Sigmoid colon (tissue), 7 donors: ENCODE measurements at regions of chr10 and their contacts with region 1.

Region 1: DNA sequence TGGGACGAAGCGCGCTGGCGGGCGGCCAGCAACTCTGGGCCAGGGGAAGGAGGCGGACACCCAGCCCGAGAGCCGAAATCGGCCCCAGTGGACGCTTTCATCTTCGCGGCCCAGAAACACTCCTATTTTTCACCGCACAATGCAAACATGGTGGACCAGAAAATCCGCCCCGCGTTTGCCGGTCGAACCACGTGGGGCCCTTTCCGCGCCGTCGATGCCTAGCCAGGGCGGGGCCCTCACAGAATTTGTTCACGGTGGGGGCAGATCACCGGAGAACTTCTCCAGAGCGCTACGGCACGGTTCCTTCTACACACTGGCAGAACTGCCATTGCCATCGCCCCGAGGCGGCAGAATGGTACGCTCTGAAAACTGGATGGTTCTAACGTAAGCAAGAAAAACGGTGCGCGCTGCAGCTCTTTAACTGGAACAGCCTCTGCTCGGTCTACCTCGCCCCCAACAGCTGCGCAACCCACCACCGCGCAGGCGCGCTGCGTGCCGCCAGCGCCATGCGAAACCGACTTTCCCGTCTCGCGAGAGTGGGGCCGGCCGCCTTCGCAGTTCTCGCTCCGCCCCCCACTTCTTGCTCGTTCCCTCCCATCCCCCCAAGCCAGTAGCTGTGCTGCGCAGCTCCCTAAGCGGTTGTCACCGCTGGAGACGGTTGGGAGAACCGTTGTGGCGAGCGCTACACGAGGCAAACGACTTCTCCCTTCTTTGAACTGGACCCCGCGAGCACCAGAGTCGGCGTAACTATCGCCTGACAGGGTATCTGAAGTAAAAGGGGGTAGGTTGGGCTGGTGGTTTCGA is at the start of gene HNRNPH3:
- DNase-seq: peak; percentile 99
- H3K4me3 ChIP-seq: peak within 1 kb of the TSS; percentile 72 to 98 (median 87)
- H3K27ac ChIP-seq: peak within 1 kb of the TSS; percentile 91 to 100 (median 98)
- H3K4me1 ChIP-seq: peaks cover 0 to 53% (median 47%) of the 10 kb centered on the region in 4 donors
- H3K27me3 ChIP-seq: no peaks in the 10 kb centered on the region
- CTCF ChIP-seq: no peak
- EP300 ChIP-seq: peak in 1 of 4 donors; percentile 25
- POLR2A ChIP-seq: peak; percentile 99
- total RNA-seq, gene HNRNPH3: 50.7 to 68.3 (median 57.4) TPM

Region 2: GRCh38 chr10:67849331-67850011 is 482.2 kb before region 1 on chr10:
- intact Hi-C with region 1: loop called (anchors 2 kb)
- DNase-seq: peak; percentile 98
- H3K4me3 ChIP-seq: peak overlapping the region; percentile 64 to 71 (median 70)
- H3K27ac ChIP-seq: peak overlapping the region; percentile 92 to 96 (median 93)
- H3K4me1 ChIP-seq: peaks cover 0 to 8% (median 7%) of the 10 kb centered on the region in 4 donors
- H3K27me3 ChIP-seq: no peaks in the 10 kb centered on the region
- CTCF ChIP-seq: peak in 1 of 4 experiments; percentile 37
- EP300 ChIP-seq: no peak
- POLR2A ChIP-seq: peak; percentile 44 to 74

Region 3: GRCh38 chr10:67884313-67884841 is 447.3 kb before region 1 on chr10 and contains the start of gene SIRT1:
- intact Hi-C with region 1: loop called (anchors 1 kb)
- DNase-seq: peak; percentile 99
- H3K4me3 ChIP-seq: peak within 1 kb of the TSS; percentile 61 to 86 (median 66)
- H3K27ac ChIP-seq: peak within 1 kb of the TSS; percentile 85 to 98 (median 94)
- H3K4me1 ChIP-seq: peaks cover 0 to 38% (median 10%) of the 10 kb centered on the region in 4 donors
- H3K27me3 ChIP-seq: no peaks in the 10 kb centered on the region
- CTCF ChIP-seq: no peak
- EP300 ChIP-seq: peak in 1 of 4 donors; percentile 40
- POLR2A ChIP-seq: peak; percentile 69 to 88
- total RNA-seq, gene SIRT1: 22.4 to 38.2 (median 33.9) TPM

Region 4: DNA sequence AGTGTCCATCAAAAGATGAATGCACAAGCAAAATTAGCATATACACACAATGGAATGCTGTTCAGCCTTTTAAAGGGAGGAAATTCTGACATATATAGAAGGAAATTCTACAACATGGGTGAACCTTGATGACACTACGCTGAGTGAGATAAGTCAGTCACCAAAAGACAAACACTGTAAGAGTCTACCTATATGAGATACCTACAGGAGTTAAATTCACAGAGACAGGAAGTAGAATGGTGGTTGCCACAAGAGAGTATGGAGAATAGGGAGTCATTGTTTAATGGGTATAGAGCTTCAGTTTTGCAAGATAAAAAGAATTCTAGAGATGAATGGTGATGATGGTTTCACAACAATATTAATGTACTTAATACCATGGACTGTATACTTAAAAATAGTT is 308.4 kb before region 1 on chr10:
- intact Hi-C with region 1: no loop called
- DNase-seq: no peak
- H3K4me3 ChIP-seq: no peak overlapping the region
- H3K27ac ChIP-seq: no peak overlapping the region
- H3K4me1 ChIP-seq: no peaks in the 10 kb centered on the region
- H3K27me3 ChIP-seq: no peaks in the 10 kb centered on the region
- CTCF ChIP-seq: no peak
- EP300 ChIP-seq: no peak
- POLR2A ChIP-seq: no peak

Region 5: DNA sequence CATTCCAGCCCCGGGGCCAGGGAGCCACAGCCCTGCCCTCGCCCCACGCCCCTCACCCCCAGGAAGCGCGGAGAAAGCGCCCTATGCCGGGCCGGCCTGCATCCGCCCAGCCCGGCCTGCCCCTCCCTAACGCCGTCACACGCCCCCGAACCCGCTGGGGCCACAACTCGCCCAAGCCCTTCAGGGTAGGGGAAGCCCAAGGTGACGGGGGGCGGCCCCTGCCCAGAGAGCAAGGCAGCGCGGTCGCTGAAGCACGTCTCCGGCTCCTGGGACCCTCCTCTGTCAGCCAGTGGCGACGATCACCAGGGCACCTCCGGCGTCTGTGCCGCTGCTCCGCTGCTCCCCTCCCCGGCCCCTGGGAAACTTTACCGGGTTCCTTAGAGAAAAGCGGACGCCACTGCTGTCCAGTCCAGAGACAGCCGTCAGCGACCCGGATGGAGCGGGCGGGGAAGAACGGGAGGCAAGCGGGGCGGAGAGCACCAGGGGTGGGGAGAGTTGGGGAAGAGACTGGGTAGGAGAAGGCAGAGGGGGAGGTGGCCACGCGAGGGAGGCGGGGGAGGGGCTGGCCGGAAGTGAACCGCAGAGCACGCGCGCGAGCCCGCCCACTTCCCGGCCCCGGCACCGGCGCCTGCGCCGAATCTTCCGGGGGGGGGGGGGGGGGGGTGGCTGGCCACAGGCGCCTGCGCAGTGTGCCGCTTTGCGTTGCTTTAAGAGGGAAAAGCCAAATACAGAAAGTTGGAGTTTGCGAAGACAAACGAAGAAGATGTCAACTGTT is 256.7 kb before region 1 on chr10 and contains the start of gene HERC4:
- intact Hi-C with region 1: loop called (anchors 2 kb)
- DNase-seq: peak; percentile 98
- H3K4me3 ChIP-seq: peak within 1 kb of the TSS; percentile 74 to 100 (median 81)
- H3K27ac ChIP-seq: peak within 1 kb of the TSS; percentile 94 to 100 (median 98)
- H3K4me1 ChIP-seq: peaks cover 0 to 41% (median 32%) of the 10 kb centered on the region in 4 donors
- H3K27me3 ChIP-seq: no peaks in the 10 kb centered on the region
- CTCF ChIP-seq: no peak
- EP300 ChIP-seq: no peak
- POLR2A ChIP-seq: peak; percentile 70 to 77
- total RNA-seq, gene HERC4: 49.2 to 54.3 (median 52.0) TPM

Region 6: DNA sequence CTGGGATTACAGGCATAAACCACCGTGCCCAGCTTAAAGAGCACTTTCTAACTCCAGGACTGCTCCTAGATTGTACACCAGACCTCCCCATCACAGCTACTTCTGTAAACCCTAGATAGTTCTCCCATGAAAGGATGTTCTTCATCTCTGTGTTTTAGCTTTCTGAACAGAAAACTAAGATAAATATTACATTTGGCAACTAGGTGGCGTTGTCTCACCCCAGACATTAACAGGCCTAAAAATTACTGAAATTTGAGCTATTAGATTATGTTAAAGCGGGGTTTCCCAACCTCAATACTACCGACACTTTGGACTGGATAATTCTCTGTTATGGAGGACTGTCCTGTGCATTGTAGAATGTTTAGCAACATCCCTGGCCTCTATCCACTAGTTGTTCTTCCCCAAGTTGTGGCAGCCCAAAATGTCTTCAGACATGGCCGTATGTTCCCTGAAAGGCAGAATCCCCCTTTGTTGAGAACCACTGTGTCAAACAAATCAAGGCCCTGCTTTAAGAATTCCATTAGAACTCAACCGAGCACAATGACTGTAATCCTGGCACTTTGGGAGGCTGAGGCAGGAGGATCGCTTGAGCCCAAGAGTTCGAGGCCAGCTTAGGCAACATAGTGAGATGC is 118.8 kb before region 1 on chr10:
- intact Hi-C with region 1: loop called (anchors 5 kb)
- DNase-seq: no peak
- H3K4me3 ChIP-seq: no peak overlapping the region
- H3K27ac ChIP-seq: no peak overlapping the region
- H3K4me1 ChIP-seq: no peaks in the 10 kb centered on the region
- H3K27me3 ChIP-seq: no peaks in the 10 kb centered on the region
- CTCF ChIP-seq: peak in 3 of 4 experiments; percentile 32 to 51 (median 42)
- EP300 ChIP-seq: no peak
- POLR2A ChIP-seq: no peak

Region 7: GRCh38 chr10:68231106-68231816 is 100.4 kb before region 1 on chr10:
- intact Hi-C with region 1: loop called (anchors 1 kb)
- DNase-seq: peak; percentile 82
- H3K4me3 ChIP-seq: peak overlapping the region; percentile 47 to 66 (median 62)
- H3K27ac ChIP-seq: peak overlapping the region; percentile 81 to 93 (median 86)
- H3K4me1 ChIP-seq: peaks cover 0 to 14% (median 9%) of the 10 kb centered on the region in 4 donors
- H3K27me3 ChIP-seq: no peaks in the 10 kb centered on the region
- CTCF ChIP-seq: no peak
- EP300 ChIP-seq: no peak
- POLR2A ChIP-seq: no peak

Region 8: GRCh38 chr10:68364101-68364886 is 32.6 kb after region 1 on chr10:
- intact Hi-C with region 1: no loop called
- DNase-seq: no peak
- H3K4me3 ChIP-seq: no peak overlapping the region
- H3K27ac ChIP-seq: no peak overlapping the region
- H3K4me1 ChIP-seq: no peaks in the 10 kb centered on the region
- H3K27me3 ChIP-seq: no peaks in the 10 kb centered on the region
- CTCF ChIP-seq: no peak
- EP300 ChIP-seq: no peak
- POLR2A ChIP-seq: no peak

Region 9: GRCh38 chr10:68406815-68407548 is 75.3 kb after region 1 on chr10 and contains the start of gene RUFY2:
- intact Hi-C with region 1: loop called (anchors 10 kb)
- DNase-seq: peak; percentile 87
- H3K4me3 ChIP-seq: peak within 1 kb of the TSS; percentile 94 to 98 (median 97)
- H3K27ac ChIP-seq: peak within 1 kb of the TSS; percentile 92 to 97 (median 96)
- H3K4me1 ChIP-seq: peaks cover 0 to 16% (median 9%) of the 10 kb centered on the region in 4 donors
- H3K27me3 ChIP-seq: no peaks in the 10 kb centered on the region
- CTCF ChIP-seq: peak in 3 of 4 experiments; percentile 40 to 76 (median 41)
- EP300 ChIP-seq: no peak
- POLR2A ChIP-seq: no peak
- total RNA-seq, gene RUFY2: 19.3 to 34.9 (median 26.7) TPM